ENCODE measurements at regions of chr19 and their contacts with region 1.

Region 1: GRCh38 chr19:1812469-1813196 is 557 bp upstream of the ATP8B3 start:
- DNase-seq: peak; percentile 93
- ATAC-seq: peak; percentile 88
- H3K4me3 ChIP-seq: peak overlapping the region; percentile 45 to 84 (median 69)
- H3K27ac ChIP-seq: peak overlapping the region; percentile 72
- H3K4me1 ChIP-seq: peaks cover 18% of the 10 kb centered on the region
- H3K27me3 ChIP-seq: no peaks in the 10 kb centered on the region; a peak in 1 of 5 replicates
- CTCF ChIP-seq: peak; percentile 91
- EP300 ChIP-seq: no peak
- POLR2A ChIP-seq: peak in 1 of 2 experiments; percentile 79; a peak in 3 of 4 replicates
- RAD21 ChIP-seq: peak; percentile 84

Region 2: GRCh38 chr19:1789261-1790041 is 23.2 kb before region 1 on chr19:
- CTCF ChIA-PET with region 1: no interaction called
- POLR2A ChIA-PET with region 1: no interaction called
- in situ Hi-C with region 1: no loop called
- intact Hi-C with region 1: loop called (anchors 2 kb)
- DNase-seq: no peak
- ATAC-seq: peak; percentile 33
- H3K4me3 ChIP-seq: peak overlapping the region; percentile 37 to 64 (median 46); a peak in 4 of 6 replicates
- H3K27ac ChIP-seq: no peak overlapping the region
- H3K4me1 ChIP-seq: no peaks in the 10 kb centered on the region
- H3K27me3 ChIP-seq: peaks cover 3 to 16% of the 10 kb centered on the region in 2 experiments; a peak in 4 of 5 replicates
- CTCF ChIP-seq: no peak
- EP300 ChIP-seq: no peak
- POLR2A ChIP-seq: no peak
- RAD21 ChIP-seq: no peak

Measured in HepG2 (cell line).